ENCODE measurements at regions of chr1 and their contacts with region 1.

Region 1: GRCh38 chr1:8015036-8015808 is 10.9 kb downstream of the ERRFI1 start:
- DNase-seq: peak; percentile 53
- CTCF ChIP-seq: peak; percentile 73

Region 2: GRCh38 chr1:8314346-8315280 is 299.4 kb after region 1 on chr1:
- in situ Hi-C with region 1: loop called (anchors 10 kb)
- DNase-seq: peak; percentile 73
- CTCF ChIP-seq: peak; percentile 88

Measured in GM13977 (cell line).